ENCODE measurements at regions of chr6 and their contacts with region 1.

Region 1: DNA sequence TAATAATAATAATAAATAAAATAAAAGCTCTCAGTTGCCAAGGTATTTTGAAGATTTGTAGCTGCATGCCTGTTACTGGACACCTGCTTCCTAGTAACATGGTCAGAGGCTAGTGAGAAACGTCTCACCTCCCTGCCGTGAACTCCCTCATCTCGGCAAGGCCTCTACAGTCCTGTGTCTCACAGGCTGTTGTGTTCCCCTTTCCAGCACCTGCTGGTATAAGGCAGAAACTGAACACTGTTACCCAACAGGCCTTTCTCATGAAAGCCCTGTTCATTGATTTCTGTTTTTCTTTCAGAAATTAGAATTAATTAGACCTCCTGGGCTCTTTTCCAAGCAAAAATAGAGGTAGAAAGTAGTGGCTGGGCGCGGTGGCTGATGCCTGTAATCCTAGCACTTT is 17.6 kb upstream of the SRSF3 start:
- DNase-seq: no peak
- ATAC-seq: no peak
- H3K4me3 ChIP-seq: no peak overlapping the region
- H3K27ac ChIP-seq: no peak overlapping the region
- H3K4me1 ChIP-seq: 0 out of 2 replicates have a peak, but pooled peaks cover 4% of the 10 kb centered on the region
- H3K27me3 ChIP-seq: no peaks in the 10 kb centered on the region
- CTCF ChIP-seq: no peak
- EP300 ChIP-seq: no peak
- POLR2A ChIP-seq: no peak
- RAD21 ChIP-seq: no peak

Region 2: DNA sequence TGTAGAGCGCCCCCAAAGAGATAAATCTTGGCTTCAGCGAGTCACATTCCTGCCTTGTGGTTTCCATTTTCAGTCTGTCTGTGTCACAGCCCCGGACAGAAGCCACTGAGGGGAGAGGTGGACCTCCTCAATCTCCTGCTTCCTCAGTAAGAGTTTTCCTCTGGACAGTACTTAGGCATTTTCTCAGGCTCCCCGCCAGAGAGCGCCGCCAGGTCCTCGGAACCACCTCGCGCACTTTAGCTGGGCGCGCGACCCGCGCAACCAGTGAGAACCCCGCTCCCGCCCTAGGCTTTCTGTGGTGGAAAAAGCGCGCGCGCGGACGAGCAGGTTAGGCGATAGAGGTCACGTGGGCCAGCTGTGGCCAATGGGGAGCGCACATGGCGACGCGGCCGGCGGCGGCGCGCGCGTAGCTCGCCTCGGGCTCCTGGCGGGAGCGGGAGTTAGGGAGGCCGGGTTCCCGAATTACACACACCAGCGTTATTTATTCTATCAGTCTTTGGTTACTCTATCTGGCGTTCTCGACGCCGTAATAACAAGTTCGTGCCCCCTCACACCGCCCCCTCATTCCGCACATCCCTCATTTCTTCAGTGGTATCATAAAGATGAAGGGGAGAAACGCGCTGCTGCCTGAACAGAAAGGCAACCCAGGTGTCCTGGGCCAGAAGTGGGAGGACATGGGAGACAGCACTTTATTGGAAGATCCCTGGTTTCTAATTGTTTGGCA is 153.3 kb before region 1 on chr6:
- CTCF ChIA-PET with region 1: interaction called, 24 read pairs
- POLR2A ChIA-PET with region 1: interaction called, 6 read pairs
- RAD21 ChIA-PET with region 1: interaction called, 16 read pairs
- SMC1A ChIA-PET with region 1: interaction called, 7 read pairs
- in situ Hi-C with region 1: no loop called
- intact Hi-C with region 1: loop called (anchors 5 kb)
- DNase-seq: peak; percentile 85
- ATAC-seq: peak; percentile 98
- H3K4me3 ChIP-seq: peak overlapping the region; percentile 69
- H3K27ac ChIP-seq: peak overlapping the region; percentile 82
- H3K4me1 ChIP-seq: peaks cover 8% of the 10 kb centered on the region
- H3K27me3 ChIP-seq: no peaks in the 10 kb centered on the region
- CTCF ChIP-seq: peak; percentile 74 to 84 (median 74)
- EP300 ChIP-seq: no peak
- POLR2A ChIP-seq: peak; percentile 80
- RAD21 ChIP-seq: peak; percentile 74

Region 3: DNA sequence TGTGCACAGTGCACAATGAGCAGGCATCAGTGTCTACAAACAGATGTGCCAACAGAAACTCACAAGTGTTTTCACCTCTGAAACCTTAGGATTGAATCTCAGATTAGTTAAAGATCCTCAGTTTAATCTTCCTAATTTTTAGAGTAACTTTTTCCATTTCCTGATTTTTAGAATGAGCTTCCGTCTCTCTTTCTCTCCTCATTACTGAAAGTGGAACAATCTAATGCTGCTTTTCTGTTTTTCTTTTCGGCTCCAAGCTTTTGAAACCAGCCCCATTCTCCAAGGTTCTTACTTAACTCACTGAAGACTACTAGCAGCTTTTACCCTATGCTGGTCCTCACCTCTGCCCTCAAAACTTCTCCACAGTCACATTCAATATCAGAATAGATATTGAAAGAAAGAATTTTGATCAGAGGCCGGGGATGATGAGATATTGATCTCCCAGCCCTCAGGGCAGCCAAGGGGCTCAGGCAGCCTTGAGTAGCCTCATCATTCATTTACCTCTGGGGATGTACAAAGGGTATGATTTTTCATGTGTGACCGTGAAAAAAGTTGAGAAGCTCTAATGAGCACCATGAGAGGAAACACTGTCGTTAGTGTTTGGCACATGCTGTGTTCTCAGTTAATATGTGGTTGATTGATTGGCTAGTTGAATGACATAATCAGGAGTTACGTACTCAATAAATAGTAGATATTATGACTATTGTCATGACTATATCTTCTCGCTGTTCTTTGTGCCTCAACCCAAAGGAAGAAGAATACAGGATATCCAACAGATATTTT is 17.4 kb before region 1 on chr6:
- CTCF ChIA-PET with region 1: interaction called, 11 read pairs
- POLR2A ChIA-PET with region 1: no interaction called
- RAD21 ChIA-PET with region 1: interaction called, 4 read pairs
- SMC1A ChIA-PET with region 1: interaction called, 5 read pairs
- in situ Hi-C with region 1: no loop called
- intact Hi-C with region 1: no loop called
- DNase-seq: no peak
- ATAC-seq: peak; percentile 93
- H3K4me3 ChIP-seq: no peak overlapping the region
- H3K27ac ChIP-seq: no peak overlapping the region
- H3K4me1 ChIP-seq: no peaks in the 10 kb centered on the region
- H3K27me3 ChIP-seq: no peaks in the 10 kb centered on the region
- CTCF ChIP-seq: no peak
- EP300 ChIP-seq: 0 out of 4 replicates have a peak, but pooled peaks of 1 of the 2 experiments have one; percentile 31
- POLR2A ChIP-seq: no peak
- RAD21 ChIP-seq: no peak

Region 4: GRCh38 chr6:36692220-36692619 is 115.7 kb after region 1 on chr6:
- CTCF ChIA-PET with region 1: no interaction called
- POLR2A ChIA-PET with region 1: no interaction called
- RAD21 ChIA-PET with region 1: no interaction called
- SMC1A ChIA-PET with region 1: no interaction called
- in situ Hi-C with region 1: no loop called
- intact Hi-C with region 1: no loop called
- DNase-seq: no peak
- ATAC-seq: peak; percentile 88
- H3K4me3 ChIP-seq: no peak overlapping the region
- H3K27ac ChIP-seq: 0 out of 2 replicates have a peak overlapping the region, but pooled peaks have one; percentile 24
- H3K4me1 ChIP-seq: peaks cover 16% of the 10 kb centered on the region
- H3K27me3 ChIP-seq: no peaks in the 10 kb centered on the region
- CTCF ChIP-seq: no peak
- EP300 ChIP-seq: no peak
- POLR2A ChIP-seq: no peak
- RAD21 ChIP-seq: no peak

Measured in GM12878 (cell line).